Heart left ventricle (tissue), 16 donors: ENCODE measurements at regions of chr21 and their contacts with region 1.

Region 1: GRCh38 chr21:34061983-34062382 is 11.4 kb upstream of the MRPS6 start:
- DNase-seq: no peak
- ATAC-seq: no peak
- H3K4me3 ChIP-seq: no peak overlapping the region
- H3K27ac ChIP-seq: no peak overlapping the region
- H3K4me1 ChIP-seq: no peaks in the 10 kb centered on the region
- H3K27me3 ChIP-seq: no peaks in the 10 kb centered on the region
- CTCF ChIP-seq: no peak
- POLR2A ChIP-seq: no peak

Region 2: DNA sequence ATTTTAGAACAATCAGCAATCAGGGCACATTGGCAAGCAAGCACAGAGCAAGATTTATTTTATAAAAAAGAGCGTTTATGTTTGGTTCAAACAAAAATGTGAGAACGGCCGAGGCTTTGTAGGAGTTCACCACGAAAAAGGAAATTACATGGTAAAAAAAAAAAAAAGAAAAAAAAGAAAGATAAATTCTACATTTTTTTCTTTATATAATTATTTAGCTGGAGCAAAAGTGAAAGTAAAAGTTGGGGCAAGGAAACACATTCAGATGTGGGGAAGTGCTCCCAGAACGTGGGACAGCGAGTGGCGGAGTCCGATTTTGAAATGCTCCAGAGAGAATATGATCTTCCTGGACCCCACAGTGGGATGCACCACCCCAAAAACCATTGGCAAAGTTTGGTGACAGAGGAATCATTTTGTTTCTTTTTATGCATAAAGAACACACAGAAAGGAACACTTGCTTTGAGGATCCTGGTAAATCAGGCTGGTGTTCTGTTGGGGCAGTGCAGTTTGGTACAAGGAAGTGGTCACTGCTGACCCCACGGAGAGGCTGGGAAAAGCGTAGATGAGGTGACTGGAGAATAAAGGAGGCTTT is 130.1 kb before region 1 on chr21:
- intact Hi-C with region 1: loop called in 1 of 10 experiments (anchors 10 kb)
- DNase-seq: no peak
- ATAC-seq: peak in 3 of 4 donors; percentile 50 to 61 (median 58)
- H3K4me3 ChIP-seq: peak overlapping the region in 11 of 12 donors; percentile 14 to 59 (median 44)
- H3K27ac ChIP-seq: peak overlapping the region in 9 of 12 donors; percentile 0 to 88 (median 44)
- H3K4me1 ChIP-seq: peaks cover 0 to 27% (median 7%) of the 10 kb centered on the region in 12 donors
- H3K27me3 ChIP-seq: no peaks in the 10 kb centered on the region
- CTCF ChIP-seq: no peak
- POLR2A ChIP-seq: no peak

Region 3: GRCh38 chr21:34011660-34012059 is 50.3 kb before region 1 on chr21:
- intact Hi-C with region 1: loop called in 1 of 10 experiments (anchors 5 kb)
- DNase-seq: no peak
- ATAC-seq: no peak
- H3K4me3 ChIP-seq: no peak overlapping the region
- H3K27ac ChIP-seq: no peak overlapping the region
- H3K4me1 ChIP-seq: no peaks in the 10 kb centered on the region
- H3K27me3 ChIP-seq: no peaks in the 10 kb centered on the region
- CTCF ChIP-seq: no peak
- POLR2A ChIP-seq: no peak

Region 4: GRCh38 chr21:34092262-34092921 is 30.4 kb after region 1 on chr21:
- intact Hi-C with region 1: no loop called
- DNase-seq: no peak
- ATAC-seq: no peak
- H3K4me3 ChIP-seq: no peak overlapping the region
- H3K27ac ChIP-seq: no peak overlapping the region
- H3K4me1 ChIP-seq: peaks cover 0 to 25% (median 3%) of the 10 kb centered on the region in 12 donors
- H3K27me3 ChIP-seq: no peaks in the 10 kb centered on the region
- CTCF ChIP-seq: no peak
- POLR2A ChIP-seq: no peak

Region 5: DNA sequence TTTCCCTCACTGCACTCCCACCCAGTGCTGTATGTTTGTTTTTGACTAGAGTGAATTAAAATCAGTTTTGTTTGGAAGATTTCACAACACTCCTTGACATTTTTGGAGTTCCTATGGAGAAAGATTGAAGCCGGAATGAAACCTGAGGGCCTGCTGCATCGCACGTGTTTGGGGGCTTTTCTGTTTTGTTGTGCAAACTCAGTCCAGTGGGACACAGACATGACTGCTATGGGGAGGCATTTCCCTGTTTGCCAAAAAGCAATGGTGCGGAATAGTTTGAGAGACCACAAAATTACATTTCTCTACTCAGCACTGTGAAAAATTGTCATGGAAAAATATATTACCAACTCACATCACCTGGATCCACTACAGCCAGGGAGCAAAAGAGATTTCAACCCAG is 258.0 kb after region 1 on chr21:
- intact Hi-C with region 1: loop called in 1 of 10 experiments (anchors 10 kb)
- DNase-seq: no peak
- ATAC-seq: no peak
- H3K4me3 ChIP-seq: no peak overlapping the region
- H3K27ac ChIP-seq: no peak overlapping the region
- H3K4me1 ChIP-seq: peaks cover 0 to 5% (median 0%) of the 10 kb centered on the region in 12 donors
- H3K27me3 ChIP-seq: no peaks in the 10 kb centered on the region
- CTCF ChIP-seq: no peak
- POLR2A ChIP-seq: no peak

Region 6: GRCh38 chr21:36015045-36015444 is 1953.1 kb after region 1 on chr21:
- intact Hi-C with region 1: no loop called
- DNase-seq: no peak
- ATAC-seq: no peak
- H3K4me3 ChIP-seq: no peak overlapping the region
- H3K27ac ChIP-seq: no peak overlapping the region
- H3K4me1 ChIP-seq: no peaks in the 10 kb centered on the region
- H3K27me3 ChIP-seq: peaks cover 0 to 4% (median 0%) of the 10 kb centered on the region in 9 donors
- CTCF ChIP-seq: no peak
- POLR2A ChIP-seq: no peak